Activated CD4-positive, alpha-beta memory T cell treated with anti-CD3 and anti-CD28 coated beads for 36 hours (primary cell): ENCODE measurements at regions of chr11 and their contacts with region 1.

Region 1: DNA sequence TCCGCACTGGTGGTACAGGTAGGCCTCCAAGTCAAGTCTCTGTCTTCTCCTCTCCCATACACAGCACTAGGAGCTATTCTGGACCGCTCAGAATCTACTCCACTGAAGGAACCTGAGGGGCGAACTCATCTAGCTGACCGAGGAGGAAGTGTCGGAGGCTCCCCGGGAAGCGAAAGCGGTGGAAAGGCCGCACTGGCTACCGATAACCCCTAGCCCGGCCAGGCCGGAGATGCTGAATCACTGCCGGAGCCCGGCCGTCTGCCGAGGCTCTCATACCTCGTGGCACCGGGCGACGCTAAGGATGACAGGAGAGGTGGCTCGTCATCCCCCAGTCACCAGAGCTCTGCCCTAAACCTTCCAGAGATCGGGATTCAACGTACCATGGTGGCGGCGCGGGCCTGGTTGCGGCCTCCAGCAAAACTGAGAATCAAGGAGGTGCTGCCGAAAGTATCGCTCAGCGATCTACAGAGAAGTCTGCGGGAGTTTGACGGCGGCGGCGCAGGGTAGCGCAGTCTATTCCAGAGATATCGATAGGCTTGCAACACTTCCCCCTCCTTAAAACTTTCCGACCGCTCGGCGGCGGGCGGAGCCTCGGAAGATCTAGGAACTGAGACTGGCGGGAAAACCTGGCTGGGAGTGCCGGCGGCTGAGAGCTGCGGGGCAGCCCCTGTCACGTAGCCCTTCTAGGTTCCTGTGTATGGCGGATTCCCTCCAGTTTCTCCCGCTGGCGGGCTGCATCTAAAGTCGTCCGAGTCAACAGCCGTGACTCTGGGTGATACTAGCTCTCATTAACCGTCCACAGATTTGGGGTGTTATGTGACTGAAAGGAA is at the start of gene PSMA1:
- DNase-seq: peak; percentile 97
- H3K4me3 Mint-ChIP-seq: peak within 1 kb of the TSS; percentile 96
- H3K27ac Mint-ChIP-seq: peak within 1 kb of the TSS; percentile 97
- H3K4me1 Mint-ChIP-seq: peaks cover 28% of the 10 kb centered on the region
- H3K27me3 Mint-ChIP-seq: no peaks in the 10 kb centered on the region
- total RNA-seq, gene PSMA1: 332 to 339 TPM

Region 2: DNA sequence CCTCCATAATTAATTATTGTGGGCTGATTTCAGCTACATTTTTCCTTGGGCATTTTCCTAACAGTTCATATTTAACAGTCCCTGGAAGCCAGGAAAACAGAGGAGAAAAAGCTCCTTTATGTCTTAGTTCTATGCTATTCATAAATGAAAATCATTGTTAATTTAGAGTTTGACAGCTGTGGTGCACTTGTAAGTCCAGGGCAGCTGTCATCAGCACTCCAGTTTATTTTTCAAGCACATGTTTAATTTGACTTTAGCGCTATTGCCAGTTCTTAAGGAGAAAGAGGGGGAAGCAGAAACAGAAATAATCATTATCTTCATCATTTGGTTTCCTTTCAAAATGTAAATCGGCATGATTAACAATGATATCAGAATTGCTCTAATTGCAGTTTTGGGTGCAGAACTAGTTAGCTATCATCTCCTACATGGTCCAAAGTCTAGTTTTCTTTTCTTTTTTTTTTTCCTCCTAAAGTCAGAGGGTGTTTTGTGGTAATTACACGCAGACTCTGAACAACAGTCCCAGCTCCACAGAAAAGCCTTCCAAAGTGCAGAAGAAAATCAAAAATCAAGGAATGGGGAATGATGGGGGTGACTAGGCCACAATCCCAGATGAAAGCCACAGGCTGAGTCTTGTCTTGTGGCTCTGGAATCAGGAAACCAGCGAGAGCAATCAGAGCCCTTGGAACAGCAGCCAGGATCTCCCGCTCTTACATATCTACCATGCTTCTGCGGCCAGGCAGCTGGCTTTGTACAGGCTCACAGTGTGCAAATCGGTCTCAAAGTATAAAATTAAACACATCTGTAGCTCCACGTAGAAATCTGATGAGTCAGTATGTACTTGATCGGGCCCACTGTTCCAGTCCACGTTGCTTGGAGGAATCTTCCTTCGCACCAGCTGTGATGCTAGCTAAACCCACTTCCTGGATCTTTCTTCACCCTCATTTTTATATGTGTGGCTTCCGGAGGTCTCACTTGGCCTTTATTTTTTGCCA is 465.7 kb before region 1 on chr11:
- CTCF ChIA-PET with region 1: no interaction called
- POLR2A ChIA-PET with region 1: no interaction called
- intact Hi-C with region 1: no loop called
- DNase-seq: no peak
- H3K4me3 Mint-ChIP-seq: no peak overlapping the region
- H3K27ac Mint-ChIP-seq: no peak overlapping the region
- H3K4me1 Mint-ChIP-seq: peaks cover 14% of the 10 kb centered on the region
- H3K27me3 Mint-ChIP-seq: no peaks in the 10 kb centered on the region

Region 3: GRCh38 chr11:14463623-14464022 is 56.5 kb before region 1 on chr11:
- CTCF ChIA-PET with region 1: no interaction called
- POLR2A ChIA-PET with region 1: no interaction called
- intact Hi-C with region 1: loop called (anchors 5 kb)
- DNase-seq: no peak
- H3K4me3 Mint-ChIP-seq: no peak overlapping the region
- H3K27ac Mint-ChIP-seq: no peak overlapping the region
- H3K4me1 Mint-ChIP-seq: peaks cover 12% of the 10 kb centered on the region
- H3K27me3 Mint-ChIP-seq: no peaks in the 10 kb centered on the region

Region 4: DNA sequence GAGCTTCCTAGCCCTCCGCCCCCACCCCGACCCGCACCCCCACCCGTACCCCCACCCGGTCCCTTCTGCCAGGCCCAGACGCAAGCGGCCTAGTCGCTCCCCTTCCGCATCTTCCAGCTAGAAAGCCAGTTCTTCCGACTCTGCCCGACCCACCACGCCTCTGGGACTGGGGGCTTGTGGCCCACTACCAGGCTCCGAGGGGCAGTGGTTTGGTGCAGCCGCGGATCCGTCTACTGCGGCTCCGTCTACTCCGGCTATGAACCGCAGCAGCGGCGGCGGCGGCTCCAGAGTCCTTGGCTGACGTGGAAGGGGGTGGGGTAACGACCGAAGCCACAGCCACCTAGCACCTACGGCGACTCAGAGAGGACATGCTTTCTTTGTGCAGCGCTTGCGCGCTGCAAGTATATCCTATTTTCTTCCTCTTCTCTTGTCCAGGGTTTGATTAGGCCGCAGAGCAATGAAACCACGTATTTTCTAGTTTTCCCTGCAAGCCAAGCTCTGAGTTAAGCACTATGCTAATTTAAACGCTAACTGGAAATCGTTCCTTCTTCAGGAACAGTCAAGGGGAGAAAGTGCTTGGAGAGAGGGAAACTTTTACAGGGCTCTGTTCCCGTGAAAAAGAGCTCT is 20.5 kb before region 1 on chr11 and contains the start of gene COPB1:
- CTCF ChIA-PET with region 1: interaction called, 3 read pairs
- POLR2A ChIA-PET with region 1: interaction called, 24 read pairs
- intact Hi-C with region 1: loop called (anchors 1 kb)
- DNase-seq: peak; percentile 96
- H3K4me3 Mint-ChIP-seq: peak within 1 kb of the TSS; percentile 96
- H3K27ac Mint-ChIP-seq: peak within 1 kb of the TSS; percentile 97
- H3K4me1 Mint-ChIP-seq: peaks cover 42% of the 10 kb centered on the region
- H3K27me3 Mint-ChIP-seq: no peaks in the 10 kb centered on the region
- total RNA-seq, gene COPB1: 107 to 108 TPM

Region 5: DNA sequence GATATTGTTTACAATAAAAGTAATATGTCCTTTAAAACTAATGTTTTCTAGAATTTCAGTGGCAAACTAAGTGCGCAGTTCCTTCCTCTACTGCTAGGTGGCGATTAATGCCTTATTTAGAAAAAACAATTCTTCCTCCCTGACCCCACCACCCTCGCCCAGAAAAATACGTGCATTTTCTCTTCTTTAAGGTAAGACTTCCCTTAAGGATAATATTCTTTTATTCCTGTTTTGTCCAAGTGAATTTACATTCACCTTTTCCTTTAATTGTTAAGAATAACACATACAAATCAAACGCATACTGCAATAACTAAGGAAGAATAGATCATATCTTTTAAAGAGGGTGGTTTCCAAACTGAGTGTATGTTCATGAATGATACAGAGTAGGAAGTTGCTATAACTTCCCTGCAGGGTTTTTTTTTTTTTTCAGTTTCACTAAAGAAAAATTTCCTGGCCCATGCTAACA is 17.0 kb after region 1 on chr11:
- CTCF ChIA-PET with region 1: interaction called, 3 read pairs
- POLR2A ChIA-PET with region 1: interaction called, 3 read pairs
- intact Hi-C with region 1: loop called (anchors 2 kb)
- DNase-seq: peak; percentile 42
- H3K4me3 Mint-ChIP-seq: peak overlapping the region; percentile 51
- H3K27ac Mint-ChIP-seq: peak overlapping the region; percentile 76
- H3K4me1 Mint-ChIP-seq: peaks cover 19% of the 10 kb centered on the region
- H3K27me3 Mint-ChIP-seq: no peaks in the 10 kb centered on the region

Region 6: DNA sequence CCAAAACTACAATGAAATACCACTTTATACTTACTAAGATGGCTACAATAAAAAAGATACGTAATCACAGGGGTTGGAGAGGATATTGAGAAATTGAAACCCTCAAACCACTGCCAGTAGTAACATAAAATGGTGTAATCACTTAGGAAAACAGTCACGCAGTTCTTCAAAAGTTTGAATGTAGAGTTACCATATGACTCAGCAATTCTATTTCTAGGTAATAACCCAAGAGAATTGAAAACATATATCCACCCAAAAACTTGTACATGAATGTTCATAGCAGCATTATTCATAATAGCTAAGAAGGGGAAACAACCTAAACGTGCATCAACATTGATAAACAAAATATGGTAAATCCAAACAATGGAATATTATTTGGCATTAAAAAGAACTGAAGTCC is 24.5 kb after region 1 on chr11:
- CTCF ChIA-PET with region 1: interaction called, 3 read pairs
- POLR2A ChIA-PET with region 1: interaction called, 4 read pairs
- intact Hi-C with region 1: loop called (anchors 1 kb)
- DNase-seq: no peak
- H3K4me3 Mint-ChIP-seq: no peak overlapping the region
- H3K27ac Mint-ChIP-seq: peak overlapping the region; percentile 82
- H3K4me1 Mint-ChIP-seq: peaks cover 39% of the 10 kb centered on the region
- H3K27me3 Mint-ChIP-seq: no peaks in the 10 kb centered on the region

Region 7: DNA sequence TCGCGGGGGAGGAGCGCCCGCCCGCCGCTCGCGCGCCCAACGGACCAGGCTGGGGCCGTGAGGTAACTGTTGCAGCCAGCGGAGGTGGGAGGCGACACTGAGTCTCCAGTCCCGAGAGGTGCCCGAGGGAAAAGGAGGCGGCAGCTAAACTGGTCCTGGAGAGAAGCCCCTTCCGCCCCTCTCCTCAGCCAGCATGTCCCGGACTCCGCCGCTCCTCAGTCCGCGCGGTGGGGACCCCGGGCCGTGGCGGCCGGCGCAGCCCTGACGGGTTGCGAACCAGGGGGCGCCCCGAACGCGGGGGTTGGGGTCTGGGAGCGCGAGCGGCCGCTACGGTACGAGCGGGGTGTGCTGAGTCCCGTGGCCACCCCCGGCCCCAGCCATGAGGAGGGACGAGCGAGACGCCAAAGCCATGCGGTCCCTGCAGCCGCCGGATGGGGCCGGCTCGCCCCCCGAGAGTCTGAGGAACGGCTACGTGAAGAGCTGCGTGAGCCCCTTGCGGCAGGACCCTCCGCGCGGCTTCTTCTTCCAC is 123.6 kb after region 1 on chr11 and contains the start of gene PDE3B:
- CTCF ChIA-PET with region 1: interaction called, 4 read pairs
- POLR2A ChIA-PET with region 1: interaction called, 23 read pairs
- intact Hi-C with region 1: loop called (anchors 1 kb)
- DNase-seq: peak; percentile 87
- H3K4me3 Mint-ChIP-seq: peak within 1 kb of the TSS; percentile 71
- H3K27ac Mint-ChIP-seq: peak within 1 kb of the TSS; percentile 89
- H3K4me1 Mint-ChIP-seq: peaks cover 49% of the 10 kb centered on the region
- H3K27me3 Mint-ChIP-seq: no peaks in the 10 kb centered on the region
- total RNA-seq, gene PDE3B: 21.6 to 21.8 TPM

Region 8: DNA sequence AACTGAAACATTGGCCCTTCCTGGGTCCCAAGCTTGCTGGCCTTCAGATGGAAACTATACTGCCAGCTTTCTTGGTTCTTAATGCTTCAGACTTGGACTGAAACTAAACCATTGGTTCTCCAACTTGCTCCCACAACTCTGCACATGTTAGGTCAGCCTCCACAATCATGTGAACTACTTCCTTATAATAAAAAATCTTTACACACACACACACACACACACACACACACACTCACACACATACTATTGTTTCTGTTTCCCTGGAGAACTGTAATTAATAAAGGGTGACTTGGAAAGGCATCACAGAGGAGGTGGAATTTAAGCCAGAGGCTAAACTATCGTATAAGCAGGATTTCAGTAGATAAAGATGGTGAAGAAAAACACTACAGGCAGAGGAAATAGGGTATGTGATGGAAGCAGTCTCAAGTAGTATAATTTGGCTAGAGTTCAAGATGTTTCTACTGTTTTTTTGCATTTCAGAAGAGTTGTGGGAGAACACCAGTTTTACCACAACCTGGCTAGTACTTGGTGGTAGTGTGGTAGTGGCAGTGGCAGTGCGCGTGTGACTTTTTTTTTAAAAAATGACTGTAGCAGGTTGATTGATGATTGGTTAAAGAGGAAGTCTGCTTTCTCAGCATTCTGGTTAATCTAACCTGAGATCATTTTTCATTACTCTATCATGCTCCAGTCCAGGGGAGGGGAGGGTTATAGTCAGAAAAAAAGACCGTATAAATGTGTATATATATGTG is 193.5 kb after region 1 on chr11:
- CTCF ChIA-PET with region 1: no interaction called
- POLR2A ChIA-PET with region 1: no interaction called
- intact Hi-C with region 1: loop called (anchors 5 kb)
- DNase-seq: peak; percentile 40
- H3K4me3 Mint-ChIP-seq: peak overlapping the region; percentile 2
- H3K27ac Mint-ChIP-seq: peak overlapping the region; percentile 61
- H3K4me1 Mint-ChIP-seq: peaks cover 38% of the 10 kb centered on the region
- H3K27me3 Mint-ChIP-seq: no peaks in the 10 kb centered on the region